ENCODE measurements at regions of chr4 and their contacts with region 1.

Region 1: DNA sequence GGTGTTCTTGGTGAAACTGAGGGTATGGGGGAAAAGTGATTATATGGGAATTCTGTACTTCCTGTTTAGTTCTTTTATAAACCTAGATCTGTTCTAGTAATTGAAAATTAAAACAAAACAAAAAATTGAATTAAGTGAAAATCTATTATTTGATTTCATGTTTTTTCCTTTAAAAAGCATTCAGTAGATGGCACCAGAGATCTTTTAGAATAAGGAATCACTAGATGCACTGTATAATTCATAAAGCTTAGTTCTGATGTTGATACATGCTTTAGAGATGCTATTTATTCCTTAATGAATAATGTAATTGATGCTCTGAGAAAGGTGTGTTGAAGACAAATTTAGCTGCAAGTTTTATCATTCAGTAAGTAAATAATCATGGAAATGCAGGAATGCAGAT is 87.3 kb downstream of the LCORL start:
- DNase-seq: no peak
- H3K4me3 Mint-ChIP-seq: no peak overlapping the region
- H3K27ac Mint-ChIP-seq: no peak overlapping the region
- H3K4me1 Mint-ChIP-seq: no peaks in the 10 kb centered on the region
- H3K27me3 Mint-ChIP-seq: no peaks in the 10 kb centered on the region

Region 2: DNA sequence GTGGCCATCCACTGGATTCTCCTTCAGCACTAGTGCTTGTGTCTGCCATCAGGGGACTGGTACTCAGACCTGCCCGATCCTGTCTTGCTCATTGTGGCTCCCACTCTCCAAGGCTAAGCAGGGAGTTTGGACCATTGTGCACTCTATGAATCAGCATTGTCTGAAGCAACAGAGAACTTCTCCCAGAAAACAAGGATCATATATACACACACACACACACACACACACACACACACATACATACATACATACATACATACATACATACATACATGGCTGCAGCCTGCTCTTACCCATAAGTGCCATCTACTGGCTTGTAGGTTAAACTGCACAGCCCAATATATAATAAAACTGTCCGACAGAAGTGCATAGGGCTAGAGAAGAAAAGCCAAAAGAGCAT is 432.6 kb after region 1 on chr4:
- intact Hi-C with region 1: loop called (anchors 5 kb)
- DNase-seq: no peak
- H3K4me3 Mint-ChIP-seq: no peak overlapping the region
- H3K27ac Mint-ChIP-seq: no peak overlapping the region
- H3K4me1 Mint-ChIP-seq: peaks cover 1% of the 10 kb centered on the region
- H3K27me3 Mint-ChIP-seq: no peaks in the 10 kb centered on the region

Measured in activated T-helper 2 cell treated with anti-CD3 and anti-CD28 coated beads, Interferon-gamma antibody, Interleukin-2, Interleukin-4, amounts not matched to agents 10 μg/mL and 5 μg/mL and 100 μg/mL, durations not matched to agents 14 hours and 24 hours and 36 hours (primary cell).